ENCODE measurements at regions of chr10 and their contacts with region 1.

Region 1: GRCh38 chr10:104521901-104522694 is 119.0 kb upstream of the SORCS3 start:
- DNase-seq: peak in 1 of 4 donors; percentile 7
- ATAC-seq: no peak
- H3K4me3 ChIP-seq: no peak overlapping the region
- H3K27ac ChIP-seq: no peak overlapping the region
- H3K4me1 ChIP-seq: no peaks in the 10 kb centered on the region
- H3K27me3 ChIP-seq: no peaks in the 10 kb centered on the region
- CTCF ChIP-seq: no peak
- POLR2A ChIP-seq: no peak

Region 2: GRCh38 chr10:104368381-104368780 is 153.7 kb before region 1 on chr10:
- intact Hi-C with region 1: loop called (anchors 5 kb)
- DNase-seq: no peak
- ATAC-seq: no peak
- H3K4me3 ChIP-seq: no peak overlapping the region
- H3K27ac ChIP-seq: no peak overlapping the region
- H3K4me1 ChIP-seq: no peaks in the 10 kb centered on the region
- H3K27me3 ChIP-seq: no peaks in the 10 kb centered on the region
- CTCF ChIP-seq: no peak
- POLR2A ChIP-seq: no peak

Measured in body of pancreas (tissue), 4 donors.